GM12878 (cell line): ENCODE measurements at regions of chr6 and their contacts with region 1.

Region 1: GRCh38 chr6:70310063-70310694 is 7.3 kb upstream of the COL9A1 start:
- DNase-seq: no peak
- ATAC-seq: peak; percentile 56; the same call in 2 of the 3 replicates
- H3K4me3 ChIP-seq: no peak overlapping the region
- H3K27ac ChIP-seq: no peak overlapping the region
- H3K4me1 ChIP-seq: 0 out of 2 replicates have a peak, but pooled peaks cover 3% of the 10 kb centered on the region
- H3K27me3 ChIP-seq: no peaks in the 10 kb centered on the region
- CTCF ChIP-seq: peak; percentile 39 to 69 (median 48); a peak in 5 of 6 replicates
- EP300 ChIP-seq: no peak
- POLR2A ChIP-seq: no peak
- RAD21 ChIP-seq: peak; percentile 76

Region 2: GRCh38 chr6:69848552-69848951 is 461.6 kb before region 1 on chr6:
- CTCF ChIA-PET with region 1: no interaction called
- POLR2A ChIA-PET with region 1: no interaction called
- RAD21 ChIA-PET with region 1: no interaction called
- SMC1A ChIA-PET with region 1: no interaction called
- in situ Hi-C with region 1: no loop called
- intact Hi-C with region 1: no loop called
- DNase-seq: no peak
- ATAC-seq: no peak
- H3K4me3 ChIP-seq: no peak overlapping the region
- H3K27ac ChIP-seq: no peak overlapping the region
- H3K4me1 ChIP-seq: no peaks in the 10 kb centered on the region
- H3K27me3 ChIP-seq: no peaks in the 10 kb centered on the region
- CTCF ChIP-seq: no peak
- EP300 ChIP-seq: no peak
- POLR2A ChIP-seq: no peak
- RAD21 ChIP-seq: no peak

Region 3: DNA sequence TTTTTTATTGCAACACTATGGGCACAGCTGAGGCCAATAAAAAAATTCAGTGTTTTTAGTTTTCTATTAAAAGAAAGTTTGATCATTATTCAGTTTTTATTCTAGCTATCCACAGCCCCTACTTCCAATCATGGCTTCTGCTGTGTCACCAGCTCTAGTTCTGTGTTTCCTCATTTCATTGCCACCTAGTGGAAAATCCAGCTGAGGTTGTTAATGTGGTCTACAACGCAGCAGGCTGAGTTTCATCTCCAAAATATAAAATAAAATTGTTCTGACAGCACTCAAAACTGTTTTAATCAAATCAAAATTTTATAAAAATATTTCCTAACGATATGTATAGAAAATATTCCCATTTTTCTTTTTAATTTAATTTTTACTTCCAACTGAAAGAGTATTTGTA is 20.9 kb before region 1 on chr6:
- CTCF ChIA-PET with region 1: interaction called, 46 read pairs
- POLR2A ChIA-PET with region 1: no interaction called
- RAD21 ChIA-PET with region 1: interaction called, 5 read pairs
- SMC1A ChIA-PET with region 1: interaction called, 4 read pairs
- in situ Hi-C with region 1: no loop called
- intact Hi-C with region 1: no loop called
- DNase-seq: no peak
- ATAC-seq: no peak
- H3K4me3 ChIP-seq: no peak overlapping the region
- H3K27ac ChIP-seq: no peak overlapping the region
- H3K4me1 ChIP-seq: no peaks in the 10 kb centered on the region
- H3K27me3 ChIP-seq: peaks cover 0 to 2% of the 10 kb centered on the region in 2 experiments; a peak in 2 of 4 replicates
- CTCF ChIP-seq: no peak
- EP300 ChIP-seq: no peak
- POLR2A ChIP-seq: no peak
- RAD21 ChIP-seq: no peak

Region 4: DNA sequence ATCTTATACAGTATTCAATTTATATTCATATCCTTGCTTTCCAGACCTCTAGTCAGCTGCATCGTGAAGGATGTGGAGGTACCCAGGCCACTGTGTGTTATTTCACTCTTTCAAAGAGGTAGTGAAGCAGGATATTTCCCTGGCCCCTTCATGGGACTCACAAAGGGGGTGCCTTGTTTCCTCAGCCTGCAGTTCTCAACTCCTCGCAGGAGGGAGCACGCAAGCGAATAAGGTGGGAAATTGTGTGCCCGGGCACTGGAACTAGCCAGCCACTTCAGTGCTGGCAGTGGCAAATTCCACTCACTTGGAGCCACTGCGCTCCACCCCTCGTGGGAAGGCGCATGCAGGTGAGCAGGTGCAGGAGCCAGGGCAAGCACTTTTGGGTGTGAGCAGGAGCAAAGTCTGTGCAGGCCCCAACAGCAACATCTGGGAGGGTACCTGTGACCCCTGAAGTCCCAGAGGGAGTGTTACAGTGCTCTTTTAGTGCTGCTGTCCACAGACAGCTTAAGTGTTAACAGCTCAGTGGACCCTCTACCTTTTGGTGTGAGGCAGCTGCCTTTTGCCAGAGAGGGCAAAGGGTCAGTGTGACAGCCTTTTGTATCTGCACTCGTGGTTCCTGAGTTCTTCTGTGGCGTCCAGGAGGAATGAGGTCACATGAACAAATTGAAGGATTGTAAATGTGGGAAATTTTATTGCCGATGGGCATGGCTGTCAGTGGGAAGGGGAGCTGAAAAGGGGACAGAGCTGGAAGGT is 53.7 kb after region 1 on chr6:
- CTCF ChIA-PET with region 1: interaction called, 257 read pairs
- POLR2A ChIA-PET with region 1: no interaction called
- RAD21 ChIA-PET with region 1: interaction called, 84 read pairs
- SMC1A ChIA-PET with region 1: interaction called, 103 read pairs
- in situ Hi-C with region 1: no loop called
- intact Hi-C with region 1: loop called (anchors 1 kb)
- DNase-seq: no peak
- ATAC-seq: no peak
- H3K4me3 ChIP-seq: no peak overlapping the region
- H3K27ac ChIP-seq: no peak overlapping the region
- H3K4me1 ChIP-seq: no peaks in the 10 kb centered on the region
- H3K27me3 ChIP-seq: no peaks in the 10 kb centered on the region; a peak in 2 of 4 replicates
- CTCF ChIP-seq: no peak
- EP300 ChIP-seq: no peak
- POLR2A ChIP-seq: no peak
- RAD21 ChIP-seq: no peak

Region 5: GRCh38 chr6:70375882-70376281 is 65.7 kb after region 1 on chr6:
- CTCF ChIA-PET with region 1: interaction called, 257 read pairs
- POLR2A ChIA-PET with region 1: interaction called, 3 read pairs
- RAD21 ChIA-PET with region 1: interaction called, 84 read pairs
- SMC1A ChIA-PET with region 1: interaction called, 103 read pairs
- in situ Hi-C with region 1: no loop called
- intact Hi-C with region 1: no loop called
- DNase-seq: no peak
- ATAC-seq: 0 out of 3 replicates have a peak, but pooled peaks have one; percentile 15
- H3K4me3 ChIP-seq: no peak overlapping the region
- H3K27ac ChIP-seq: no peak overlapping the region
- H3K4me1 ChIP-seq: no peaks in the 10 kb centered on the region; the same call in 1 of the 2 replicates
- H3K27me3 ChIP-seq: no peaks in the 10 kb centered on the region; a peak in 1 of 4 replicates
- CTCF ChIP-seq: peak; percentile 7 to 37 (median 34); a peak in 4 of 6 replicates
- EP300 ChIP-seq: no peak
- POLR2A ChIP-seq: no peak
- RAD21 ChIP-seq: peak; percentile 11; the same call in 1 of the 2 replicates

Region 6: DNA sequence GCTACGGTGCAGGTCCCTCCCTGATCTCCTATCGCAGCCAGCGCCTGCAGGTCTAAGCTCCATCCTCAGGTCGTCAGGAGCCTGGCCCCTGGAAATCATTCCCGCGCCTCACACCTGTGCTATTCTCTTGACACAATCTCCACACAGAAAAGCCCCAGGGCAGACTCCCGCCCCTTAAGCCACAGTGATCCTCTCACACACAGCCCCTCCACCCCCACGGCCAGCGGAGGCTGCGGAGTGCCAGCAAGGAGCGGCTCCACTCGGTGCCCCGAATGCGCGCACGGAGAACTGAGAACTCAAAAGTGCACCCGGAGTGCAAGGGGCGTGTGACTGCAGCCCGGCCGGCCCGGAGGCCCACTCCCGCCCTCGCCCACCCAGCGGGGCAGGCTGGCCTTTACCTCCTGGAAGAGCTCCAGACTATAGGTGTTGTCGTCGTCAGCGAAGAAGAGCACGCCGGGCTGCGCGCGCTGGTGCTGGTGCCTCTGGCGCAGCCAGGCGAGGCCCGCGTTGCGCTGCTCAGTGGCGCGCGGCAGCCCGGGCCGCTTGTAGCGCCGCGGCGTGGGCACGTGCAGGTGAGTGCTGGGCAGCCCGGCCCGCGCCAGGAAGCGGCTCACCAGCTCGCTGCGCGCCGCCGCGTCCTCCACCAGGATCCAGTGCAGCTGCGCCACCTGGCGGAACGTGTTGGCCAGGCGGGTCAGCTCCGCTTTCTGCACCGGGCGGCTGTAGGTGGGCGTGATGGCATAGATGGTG is 645.4 kb after region 1 on chr6:
- CTCF ChIA-PET with region 1: interaction called, 14 read pairs
- POLR2A ChIA-PET with region 1: no interaction called
- RAD21 ChIA-PET with region 1: interaction called, 7 read pairs
- SMC1A ChIA-PET with region 1: interaction called, 3 read pairs
- in situ Hi-C with region 1: no loop called
- intact Hi-C with region 1: loop called (anchors 5 kb)
- DNase-seq: peak; percentile 11
- ATAC-seq: peak; percentile 99
- H3K4me3 ChIP-seq: peak overlapping the region; percentile 74; the same call in 1 of the 2 replicates
- H3K27ac ChIP-seq: no peak overlapping the region
- H3K4me1 ChIP-seq: peaks cover 3% of the 10 kb centered on the region; the same call in 1 of the 2 replicates
- H3K27me3 ChIP-seq: peaks cover 9 to 13% of the 10 kb centered on the region in 2 experiments
- CTCF ChIP-seq: peak; percentile 86 to 89 (median 86)
- EP300 ChIP-seq: no peak
- POLR2A ChIP-seq: no peak
- RAD21 ChIP-seq: peak; percentile 67